ENCODE measurements at regions of chr5 and their contacts with region 1.

Region 1: GRCh38 chr5:10353241-10354047 is at the start of gene MARCHF6:
- DNase-seq: peak; percentile 94
- ATAC-seq: peak; percentile 77
- H3K4me3 Mint-ChIP-seq: peak within 1 kb of the TSS; percentile 98
- H3K27ac Mint-ChIP-seq: peak within 1 kb of the TSS; percentile 98
- H3K4me1 Mint-ChIP-seq: peaks cover 49% of the 10 kb centered on the region
- H3K27me3 Mint-ChIP-seq: no peaks in the 10 kb centered on the region
- CTCF ChIP-seq: no peak
- total RNA-seq, gene MARCHF6: 116 and 124 TPM in 2 replicates

Region 2: GRCh38 chr5:10249948-10250803 is 103.3 kb before region 1 on chr5 and contains the start of gene CCT5:
- CTCF ChIA-PET with region 1: no interaction called
- POLR2A ChIA-PET with region 1: interaction called, 69 read pairs
- intact Hi-C with region 1: loop called (anchors 1 kb)
- DNase-seq: peak; percentile 80
- ATAC-seq: peak; percentile 80
- H3K4me3 Mint-ChIP-seq: peak within 1 kb of the TSS; percentile 98
- H3K27ac Mint-ChIP-seq: peak within 1 kb of the TSS; percentile 99
- H3K4me1 Mint-ChIP-seq: peaks cover 52% of the 10 kb centered on the region
- H3K27me3 Mint-ChIP-seq: no peaks in the 10 kb centered on the region
- CTCF ChIP-seq: no peak
- total RNA-seq, gene CCT5: 203 and 213 TPM in 2 replicates

Region 3: DNA sequence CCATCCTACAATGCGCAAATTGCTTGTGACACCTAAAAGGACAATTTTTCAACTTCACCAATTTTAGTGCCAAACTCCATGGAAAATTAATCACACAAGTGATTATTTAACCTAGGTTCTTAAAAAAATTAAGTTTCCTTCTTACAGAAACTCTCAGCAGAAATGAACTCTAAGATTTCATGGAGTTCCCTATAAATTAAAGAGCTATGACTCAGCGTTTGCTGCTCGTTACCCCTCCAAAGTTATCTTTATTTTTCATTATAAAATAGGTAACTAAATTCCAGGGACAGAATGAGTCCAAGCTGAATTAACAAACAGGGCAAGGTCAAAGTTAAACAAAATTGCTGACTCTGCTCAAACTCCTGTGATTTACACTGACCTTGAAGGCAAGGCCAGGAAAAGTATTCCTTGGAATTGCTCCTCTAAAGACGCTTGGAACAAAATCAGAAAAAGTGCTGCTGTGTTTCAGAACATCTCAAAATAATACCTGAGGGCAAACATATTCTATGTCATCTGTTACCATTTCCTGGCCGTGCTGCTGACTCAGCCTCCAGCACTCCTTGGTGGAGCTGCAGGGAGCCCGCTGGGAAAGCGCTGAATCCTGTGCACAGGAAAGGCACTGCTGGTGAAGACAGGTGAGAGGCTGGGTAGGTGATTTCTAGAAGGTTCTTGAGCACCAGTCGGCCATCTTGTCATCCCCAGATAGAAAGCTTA is 43.2 kb before region 1 on chr5:
- CTCF ChIA-PET with region 1: no interaction called
- POLR2A ChIA-PET with region 1: interaction called, 4 read pairs
- intact Hi-C with region 1: loop called (anchors 2 kb)
- DNase-seq: no peak
- ATAC-seq: no peak
- H3K4me3 Mint-ChIP-seq: no peak overlapping the region
- H3K27ac Mint-ChIP-seq: no peak overlapping the region
- H3K4me1 Mint-ChIP-seq: peaks cover 11% of the 10 kb centered on the region
- H3K27me3 Mint-ChIP-seq: peaks cover 29% of the 10 kb centered on the region
- CTCF ChIP-seq: no peak

Region 4: DNA sequence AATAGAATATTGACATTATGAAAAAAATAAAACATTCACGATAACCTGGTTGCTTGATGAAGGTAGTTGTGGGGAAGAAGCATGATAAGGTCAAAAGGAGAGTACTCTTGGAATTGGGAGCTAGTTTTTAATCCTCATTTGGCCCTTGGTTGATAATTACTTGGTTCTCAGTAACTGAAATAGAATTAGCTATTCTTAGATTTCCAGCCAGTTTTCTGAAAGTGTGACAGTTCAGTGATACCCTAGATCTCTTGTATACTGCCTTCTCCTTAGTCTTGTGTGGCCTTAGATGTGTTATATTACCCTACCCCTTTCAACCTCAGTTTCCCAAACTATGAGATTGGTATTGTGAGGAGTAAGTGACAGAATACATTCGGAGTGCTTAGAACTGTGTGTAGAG is 17.5 kb after region 1 on chr5:
- CTCF ChIA-PET with region 1: interaction called, 3 read pairs
- POLR2A ChIA-PET with region 1: interaction called, 5 read pairs
- intact Hi-C with region 1: loop called (anchors 2 kb)
- DNase-seq: no peak
- ATAC-seq: no peak
- H3K4me3 Mint-ChIP-seq: no peak overlapping the region
- H3K27ac Mint-ChIP-seq: peak overlapping the region; percentile 62
- H3K4me1 Mint-ChIP-seq: peaks cover 75% of the 10 kb centered on the region
- H3K27me3 Mint-ChIP-seq: no peaks in the 10 kb centered on the region
- CTCF ChIP-seq: no peak

Region 5: GRCh38 chr5:10441083-10441991 is 87.9 kb after region 1 on chr5 and contains the start of gene ROPN1L:
- CTCF ChIA-PET with region 1: no interaction called
- POLR2A ChIA-PET with region 1: interaction called, 16 read pairs
- intact Hi-C with region 1: loop called (anchors 2 kb)
- DNase-seq: peak; percentile 84
- ATAC-seq: peak; percentile 96
- H3K4me3 Mint-ChIP-seq: peak within 1 kb of the TSS; percentile 88
- H3K27ac Mint-ChIP-seq: peak within 1 kb of the TSS; percentile 9
- H3K4me1 Mint-ChIP-seq: peaks cover 37% of the 10 kb centered on the region
- H3K27me3 Mint-ChIP-seq: peaks cover 3% of the 10 kb centered on the region
- CTCF ChIP-seq: no peak
- total RNA-seq, gene ROPN1L: 0.49 TPM in 1 of 2 replicates, not detected in the other

Region 6: GRCh38 chr5:10729320-10730042 is 376.0 kb after region 1 on chr5:
- CTCF ChIA-PET with region 1: no interaction called
- POLR2A ChIA-PET with region 1: no interaction called
- intact Hi-C with region 1: loop called (anchors 5 kb)
- DNase-seq: no peak
- ATAC-seq: no peak
- H3K4me3 Mint-ChIP-seq: no peak overlapping the region
- H3K27ac Mint-ChIP-seq: no peak overlapping the region
- H3K4me1 Mint-ChIP-seq: peaks cover 50% of the 10 kb centered on the region
- H3K27me3 Mint-ChIP-seq: no peaks in the 10 kb centered on the region
- CTCF ChIP-seq: no peak